ENCODE measurements at regions of chr17 and their contacts with region 1.

Region 1: DNA sequence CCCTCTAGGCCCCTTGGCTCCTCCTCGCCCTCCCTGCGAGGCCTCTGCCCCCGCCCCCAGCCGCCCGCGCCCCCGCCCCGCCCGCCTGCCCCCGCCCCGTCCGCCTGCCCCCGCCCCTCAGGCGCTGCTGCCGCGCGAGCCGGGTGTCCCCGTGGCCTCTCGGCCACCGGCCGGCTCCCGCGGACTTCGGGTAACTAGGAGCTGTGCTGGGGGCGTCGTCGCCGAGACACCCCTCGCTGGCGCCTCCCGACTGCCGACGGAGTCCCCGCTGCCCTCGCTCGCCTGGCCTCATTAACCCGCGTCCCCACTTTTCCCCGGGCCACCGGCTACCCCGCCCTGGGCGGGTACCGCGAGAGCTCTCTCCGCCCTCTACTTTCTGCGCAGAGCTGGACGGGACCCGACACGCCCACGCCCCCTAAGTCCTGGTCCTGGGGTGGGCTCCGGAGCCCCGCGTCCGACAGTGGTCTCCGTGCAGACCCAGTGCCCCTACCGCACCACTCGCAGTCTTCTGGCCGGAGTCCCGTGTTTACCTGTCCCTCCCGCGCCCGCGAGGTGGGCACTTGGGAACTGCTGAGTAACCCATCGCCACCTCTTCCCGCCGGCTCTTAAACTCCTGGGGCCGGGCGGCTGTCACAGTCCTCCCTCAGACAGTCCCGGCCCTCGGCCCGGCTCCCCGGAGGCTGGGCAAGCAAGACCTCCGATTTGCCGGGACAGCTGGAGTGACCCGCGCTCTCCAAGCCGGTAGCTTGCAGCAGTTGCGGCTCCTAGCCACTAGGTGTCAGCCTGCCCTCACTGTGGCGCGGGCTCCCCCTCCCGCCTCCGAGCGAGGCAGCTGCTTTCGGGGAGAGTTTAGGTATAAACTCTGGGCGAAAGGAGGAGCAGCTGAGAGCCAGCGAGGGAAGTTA is at the start of gene TLCD1:
- DNase-seq: peak; percentile 69
- H3K4me3 Mint-ChIP-seq: peak within 1 kb of the TSS; percentile 89
- H3K27ac Mint-ChIP-seq: peak within 1 kb of the TSS; percentile 99
- H3K4me1 Mint-ChIP-seq: peaks cover 37% of the 10 kb centered on the region
- H3K27me3 Mint-ChIP-seq: no peaks in the 10 kb centered on the region
- CTCF ChIP-seq: peak; percentile 94
- total RNA-seq, gene TLCD1: 44.9 and 49.3 TPM in 2 replicates

Region 2: GRCh38 chr17:28750178-28751047 is 23.9 kb after region 1 on chr17:
- CTCF ChIA-PET with region 1: interaction called, 228 read pairs
- intact Hi-C with region 1: loop called (anchors 1 kb)
- DNase-seq: peak; percentile 94
- H3K4me3 Mint-ChIP-seq: no peak overlapping the region
- H3K27ac Mint-ChIP-seq: peak overlapping the region; percentile 37
- H3K4me1 Mint-ChIP-seq: peaks cover 32% of the 10 kb centered on the region
- H3K27me3 Mint-ChIP-seq: no peaks in the 10 kb centered on the region
- CTCF ChIP-seq: peak; percentile 97

Region 3: DNA sequence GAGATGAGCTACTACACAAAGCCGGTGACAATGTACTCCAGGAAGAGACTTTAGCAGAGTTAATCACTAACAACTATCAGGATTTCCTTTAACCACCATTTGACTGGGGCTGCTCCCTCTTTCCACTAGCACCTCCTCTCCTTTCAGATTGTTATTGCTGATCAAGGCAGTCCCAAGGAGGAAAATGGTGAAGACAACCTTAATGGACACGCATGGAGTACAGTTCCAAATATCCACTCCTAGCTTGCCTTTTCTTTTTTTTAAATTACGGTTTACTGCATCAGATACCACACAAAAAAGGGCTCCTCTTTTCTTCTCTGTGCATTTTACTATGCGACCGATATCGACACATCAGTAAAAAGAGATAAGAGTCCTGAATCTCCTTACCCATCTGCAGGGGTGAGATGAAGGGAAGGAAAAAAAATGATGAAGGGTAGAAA is 85.2 kb after region 1 on chr17:
- CTCF ChIA-PET with region 1: interaction called, 5 read pairs
- intact Hi-C with region 1: loop called (anchors 10 kb)
- DNase-seq: peak; percentile 46
- H3K4me3 Mint-ChIP-seq: peak overlapping the region; percentile 85
- H3K27ac Mint-ChIP-seq: peak overlapping the region; percentile 85
- H3K4me1 Mint-ChIP-seq: peaks cover 28% of the 10 kb centered on the region
- H3K27me3 Mint-ChIP-seq: no peaks in the 10 kb centered on the region
- CTCF ChIP-seq: no peak

Region 4: DNA sequence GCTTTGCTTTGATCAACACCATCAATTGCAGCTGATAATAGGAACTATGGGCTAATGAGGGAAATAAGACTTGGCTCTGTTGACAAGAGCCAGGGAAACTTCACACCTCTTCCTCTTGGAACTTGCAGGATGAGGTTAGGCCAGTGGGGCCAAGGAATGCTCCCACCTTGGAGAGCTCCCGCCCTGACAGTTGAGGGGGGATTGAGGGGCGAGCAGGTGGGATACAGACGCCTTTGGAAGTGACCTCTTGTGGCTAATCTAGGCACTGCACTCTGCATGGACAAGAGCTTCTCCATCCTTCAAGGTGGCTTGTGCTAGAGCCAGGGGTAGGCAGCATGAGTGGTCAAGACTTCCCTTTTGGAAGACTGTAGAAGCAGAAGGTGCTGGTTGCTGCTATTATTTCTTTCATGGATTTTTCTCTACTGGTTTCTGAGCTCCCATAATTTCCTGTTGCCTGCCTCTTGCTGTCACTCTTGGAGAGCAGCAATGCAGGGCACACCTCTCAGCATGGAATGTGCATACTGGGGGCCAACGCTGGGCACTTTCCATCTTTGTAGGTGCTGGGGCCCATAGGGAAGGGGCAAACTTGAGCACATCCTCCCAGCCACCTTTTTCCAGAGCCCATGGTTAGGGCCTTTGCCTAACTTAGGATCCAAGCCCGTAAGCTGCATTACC is 227.1 kb after region 1 on chr17:
- CTCF ChIA-PET with region 1: interaction called, 16 read pairs
- intact Hi-C with region 1: loop called (anchors 5 kb)
- DNase-seq: peak; percentile 56
- H3K4me3 Mint-ChIP-seq: no peak overlapping the region
- H3K27ac Mint-ChIP-seq: no peak overlapping the region
- H3K4me1 Mint-ChIP-seq: no peaks in the 10 kb centered on the region
- H3K27me3 Mint-ChIP-seq: no peaks in the 10 kb centered on the region
- CTCF ChIP-seq: peak; percentile 90